ENCODE measurements at regions of chr5 and their contacts with region 1.

Region 1: GRCh38 chr5:14664302-14665100 is at the start of gene OTULIN:
- DNase-seq: peak; percentile 62 to 96 (median 85)
- ATAC-seq: peak; percentile 65
- H3K4me3 ChIP-seq: peak within 1 kb of the TSS; percentile 60 to 65
- H3K4me3 Mint-ChIP-seq: peak within 1 kb of the TSS; percentile 95
- H3K27ac ChIP-seq: peak within 1 kb of the TSS; percentile 75 to 89
- H3K27ac Mint-ChIP-seq: peak within 1 kb of the TSS; percentile 97
- H3K4me1 ChIP-seq: peaks cover 50% of the 10 kb centered on the region
- H3K4me1 Mint-ChIP-seq: peaks cover 69% of the 10 kb centered on the region
- H3K27me3 ChIP-seq: no peaks in the 10 kb centered on the region
- H3K27me3 Mint-ChIP-seq: no peaks in the 10 kb centered on the region
- CTCF ChIP-seq: no peak
- total RNA-seq, gene OTULIN: 135 to 140 TPM

Region 2: DNA sequence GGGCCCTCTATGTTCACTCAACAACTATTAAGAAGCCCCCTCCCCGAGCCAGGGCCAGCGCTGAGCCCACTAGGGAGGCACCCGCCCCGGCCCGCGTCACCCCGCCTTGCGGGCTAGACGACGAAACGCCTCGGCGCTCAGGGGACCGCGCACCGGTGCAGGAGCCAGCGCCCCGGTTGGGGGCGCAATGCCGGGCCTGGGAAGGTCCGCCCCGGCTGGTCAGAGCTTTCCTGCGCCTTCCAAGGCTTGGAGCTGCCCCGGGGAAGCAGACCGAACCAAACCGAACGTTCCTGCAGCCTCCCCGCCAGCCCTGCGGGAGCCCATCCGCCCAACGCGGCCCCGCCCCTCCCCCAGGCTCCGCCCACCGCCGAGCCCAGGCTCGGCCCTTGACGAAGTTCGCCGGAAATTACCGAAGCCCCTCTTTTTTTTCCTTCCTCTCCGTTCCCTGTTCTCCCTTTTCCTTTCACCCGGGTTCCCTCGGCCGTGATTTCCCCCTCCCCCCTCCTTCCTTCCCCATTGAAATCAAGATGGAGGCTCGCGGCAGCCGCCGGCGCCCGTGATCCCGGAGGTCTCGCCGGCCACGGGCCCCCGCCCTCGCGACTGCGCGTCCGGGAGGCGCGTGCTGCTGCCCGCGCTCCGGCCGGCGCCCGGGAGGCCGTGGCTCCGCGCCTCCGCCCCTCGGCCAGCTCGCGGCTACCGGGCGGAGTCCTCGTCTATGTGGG is 521.5 kb before region 1 on chr5 and contains the start of gene TRIO:
- CTCF ChIA-PET with region 1: no interaction called
- POLR2A ChIA-PET with region 1: no interaction called
- intact Hi-C with region 1: loop called (anchors 5 to 10 kb)
- DNase-seq: peak; percentile 32 to 88 (median 77)
- ATAC-seq: peak; percentile 71
- H3K4me3 ChIP-seq: peak within 1 kb of the TSS; percentile 56 to 93
- H3K4me3 Mint-ChIP-seq: peak within 1 kb of the TSS; percentile 84
- H3K27ac ChIP-seq: no peak within 1 kb of the TSS
- H3K27ac Mint-ChIP-seq: no peak within 1 kb of the TSS
- H3K4me1 ChIP-seq: peaks cover 13% of the 10 kb centered on the region
- H3K4me1 Mint-ChIP-seq: peaks cover 11% of the 10 kb centered on the region
- H3K27me3 ChIP-seq: peaks cover 0 to 3% of the 10 kb centered on the region in 2 experiments
- H3K27me3 Mint-ChIP-seq: peaks cover 40% of the 10 kb centered on the region
- CTCF ChIP-seq: peak; percentile 31
- total RNA-seq, gene TRIO: 3.4 to 6.5 TPM

Region 3: DNA sequence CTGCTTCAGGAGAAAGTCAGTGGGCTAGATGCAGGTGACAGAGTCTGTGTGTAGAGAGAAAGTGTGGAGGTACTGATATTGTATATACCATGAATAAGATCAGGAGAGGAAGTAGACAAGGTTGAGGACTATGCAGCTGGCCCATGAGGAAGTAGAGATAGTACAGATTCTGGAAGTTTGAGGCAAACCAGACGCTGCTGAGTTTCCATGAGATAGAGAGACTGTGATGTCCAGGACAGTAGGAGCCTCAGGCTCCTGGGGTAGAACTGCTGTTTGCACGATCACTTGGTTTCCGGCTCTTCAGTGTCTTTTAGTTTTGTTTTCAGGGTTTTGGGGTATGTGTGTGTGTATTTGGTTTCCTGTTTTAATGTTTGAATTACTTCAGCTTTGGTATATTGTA is 69.3 kb before region 1 on chr5:
- CTCF ChIA-PET with region 1: no interaction called
- POLR2A ChIA-PET with region 1: no interaction called
- intact Hi-C with region 1: loop called in 1 of 2 experiments (anchors 5 kb)
- DNase-seq: peak in 7 of 9 experiments; percentile 28 to 79 (median 39)
- ATAC-seq: peak; percentile 75
- H3K4me3 ChIP-seq: peak overlapping the region; percentile 16 to 46
- H3K4me3 Mint-ChIP-seq: peak overlapping the region; percentile 75
- H3K27ac ChIP-seq: peak overlapping the region; percentile 52 to 86
- H3K27ac Mint-ChIP-seq: peak overlapping the region; percentile 93
- H3K4me1 ChIP-seq: peaks cover 82% of the 10 kb centered on the region
- H3K4me1 Mint-ChIP-seq: peaks cover 92% of the 10 kb centered on the region
- H3K27me3 ChIP-seq: no peaks in the 10 kb centered on the region
- H3K27me3 Mint-ChIP-seq: no peaks in the 10 kb centered on the region
- CTCF ChIP-seq: no peak

Region 4: DNA sequence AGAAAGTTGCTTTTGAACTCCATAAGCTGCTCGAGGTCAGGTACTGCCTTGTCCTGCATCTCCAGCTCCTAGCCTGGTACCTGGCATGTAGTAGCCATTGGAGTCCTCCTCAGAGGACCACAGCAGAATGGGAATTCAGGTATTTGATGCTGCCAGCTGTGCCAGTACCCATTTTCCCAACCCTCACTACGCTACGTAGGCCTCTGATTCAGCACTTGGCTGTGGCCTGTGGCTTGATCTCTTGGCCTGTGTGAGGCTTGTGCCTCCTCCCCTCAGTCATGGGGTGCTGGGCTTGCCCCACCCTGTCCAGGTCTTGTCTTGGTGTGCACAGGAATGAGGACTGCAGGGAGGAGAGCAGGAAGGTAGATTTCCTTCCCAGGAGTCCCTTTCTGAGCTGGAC is 11.8 kb after region 1 on chr5:
- CTCF ChIA-PET with region 1: interaction called, 3 read pairs
- POLR2A ChIA-PET with region 1: interaction called, 4 read pairs
- intact Hi-C with region 1: loop called in 1 of 2 experiments (anchors 1 kb)
- DNase-seq: peak in 4 of 9 experiments; percentile 36 to 55 (median 43)
- ATAC-seq: peak; percentile 48
- H3K4me3 ChIP-seq: peak overlapping the region in 1 of 2 experiments; percentile 1
- H3K4me3 Mint-ChIP-seq: peak overlapping the region; percentile 63
- H3K27ac ChIP-seq: peak overlapping the region in 1 of 2 experiments; percentile 46
- H3K27ac Mint-ChIP-seq: peak overlapping the region; percentile 77
- H3K4me1 ChIP-seq: peaks cover 43% of the 10 kb centered on the region
- H3K4me1 Mint-ChIP-seq: peaks cover 63% of the 10 kb centered on the region
- H3K27me3 ChIP-seq: no peaks in the 10 kb centered on the region
- H3K27me3 Mint-ChIP-seq: no peaks in the 10 kb centered on the region
- CTCF ChIP-seq: no peak

Region 5: GRCh38 chr5:14871210-14872069 is 206.9 kb after region 1 on chr5 and contains the start of gene ANKH:
- CTCF ChIA-PET with region 1: no interaction called
- POLR2A ChIA-PET with region 1: interaction called, 3 read pairs
- intact Hi-C with region 1: loop called (anchors 1 to 5 kb)
- DNase-seq: peak; percentile 66 to 93 (median 81)
- ATAC-seq: peak; percentile 81
- H3K4me3 ChIP-seq: peak within 1 kb of the TSS; percentile 63 to 78
- H3K4me3 Mint-ChIP-seq: peak within 1 kb of the TSS; percentile 95
- H3K27ac ChIP-seq: peak within 1 kb of the TSS; percentile 63 to 66
- H3K27ac Mint-ChIP-seq: peak within 1 kb of the TSS; percentile 94
- H3K4me1 ChIP-seq: peaks cover 13% of the 10 kb centered on the region
- H3K4me1 Mint-ChIP-seq: peaks cover 38% of the 10 kb centered on the region
- H3K27me3 ChIP-seq: no peaks in the 10 kb centered on the region
- H3K27me3 Mint-ChIP-seq: no peaks in the 10 kb centered on the region
- CTCF ChIP-seq: no peak
- total RNA-seq, gene ANKH: 56.0 to 57.7 TPM

Region 6: GRCh38 chr5:16616536-16617273 is 1952.2 kb after region 1 on chr5 and contains the start of gene RETREG1:
- CTCF ChIA-PET with region 1: no interaction called
- POLR2A ChIA-PET with region 1: no interaction called
- intact Hi-C with region 1: loop called in 1 of 2 experiments (anchors 10 kb)
- DNase-seq: peak; percentile 73 to 93 (median 90)
- ATAC-seq: peak; percentile 80
- H3K4me3 ChIP-seq: peak within 1 kb of the TSS; percentile 69 to 79
- H3K4me3 Mint-ChIP-seq: peak within 1 kb of the TSS; percentile 98
- H3K27ac ChIP-seq: peak within 1 kb of the TSS; percentile 93 to 97
- H3K27ac Mint-ChIP-seq: peak within 1 kb of the TSS; percentile 97
- H3K4me1 ChIP-seq: peaks cover 46% of the 10 kb centered on the region
- H3K4me1 Mint-ChIP-seq: peaks cover 48% of the 10 kb centered on the region
- H3K27me3 ChIP-seq: peaks cover 0 to 4% of the 10 kb centered on the region in 2 experiments
- H3K27me3 Mint-ChIP-seq: no peaks in the 10 kb centered on the region
- CTCF ChIP-seq: no peak
- total RNA-seq, gene RETREG1: 62.2 to 73.9 TPM

Measured in CD8-positive, alpha-beta T cell (primary cell).